ENCODE measurements at regions of chr9 and their contacts with region 1.

Region 1: GRCh38 chr9:6506571-6506970 is 93.6 kb downstream of the UHRF2 start:
- DNase-seq: peak; percentile 49
- H3K4me3 ChIP-seq: no peak overlapping the region
- CTCF ChIP-seq: no peak

Region 2: DNA sequence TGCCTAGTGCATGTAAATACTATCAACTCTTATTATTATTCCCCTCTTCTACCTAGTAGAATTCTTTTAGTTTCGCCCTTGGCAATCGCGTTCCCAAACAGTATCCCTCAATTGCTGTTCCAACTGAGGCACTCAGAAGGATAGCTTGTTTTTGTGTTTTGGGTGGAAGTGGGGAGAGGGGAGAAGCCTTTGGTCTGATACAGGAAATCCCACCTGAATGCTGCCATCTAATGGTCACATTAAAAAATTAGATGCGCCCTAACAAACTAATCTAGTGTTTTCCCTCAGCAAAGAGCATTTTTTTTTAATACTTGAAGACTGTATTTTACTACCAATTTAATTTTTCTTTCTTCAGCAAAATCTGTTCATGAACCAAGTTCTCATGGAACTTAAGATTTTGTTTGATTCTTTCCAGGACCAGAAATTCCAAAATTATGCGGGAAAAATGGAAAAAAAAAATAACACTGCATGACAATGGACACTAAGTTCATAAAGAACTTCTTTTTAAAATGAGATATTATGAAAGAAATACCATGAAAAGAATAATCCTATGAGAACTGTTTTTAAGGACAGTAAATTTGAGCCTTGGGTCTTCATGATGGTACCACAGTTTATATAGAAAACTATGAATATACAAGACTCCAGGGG is 161.2 kb after region 1 on chr9:
- in situ Hi-C with region 1: loop called (anchors 25 kb)
- DNase-seq: no peak
- H3K4me3 ChIP-seq: no peak overlapping the region
- CTCF ChIP-seq: peak; percentile 58

Measured in astrocyte of the cerebellum (primary cell).